B cell (primary cell): ENCODE measurements at regions of chr1 and their contacts with region 1.

Region 1: DNA sequence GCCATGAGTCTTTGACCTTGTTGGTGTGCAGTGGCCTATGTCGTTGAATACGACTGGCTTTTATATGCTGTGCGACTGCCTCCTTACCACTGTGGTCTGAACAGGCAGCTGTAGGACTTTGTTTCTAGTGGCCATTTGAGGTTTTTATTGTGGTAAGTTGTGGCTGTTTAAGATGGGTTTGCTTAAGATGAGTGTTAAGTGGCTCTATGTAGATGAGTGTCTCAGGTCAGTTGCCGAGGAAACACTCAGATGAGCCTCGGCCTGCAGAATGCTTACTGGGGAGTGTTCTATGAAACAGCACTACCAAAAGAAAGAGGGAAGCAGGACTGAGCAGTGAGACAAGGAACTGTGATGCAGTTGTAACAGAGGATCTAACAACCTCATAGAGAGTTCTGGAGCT is 14.9 kb upstream of the CD1C start:
- DNase-seq: peak; percentile 37
- ATAC-seq: peak; percentile 68
- H3K4me3 ChIP-seq: no peak overlapping the region
- H3K4me3 Mint-ChIP-seq: peak overlapping the region; percentile 70
- H3K27ac ChIP-seq: peak overlapping the region in 1 of 2 donors; percentile 47
- H3K27ac Mint-ChIP-seq: peak overlapping the region; percentile 91
- H3K4me1 ChIP-seq: peaks cover 23 to 35% of the 10 kb centered on the region in 2 donors
- H3K4me1 Mint-ChIP-seq: peaks cover 39% of the 10 kb centered on the region
- H3K27me3 ChIP-seq: no peaks in the 10 kb centered on the region
- H3K27me3 Mint-ChIP-seq: no peaks in the 10 kb centered on the region
- CTCF ChIP-seq: no peak

Region 2: GRCh38 chr1:157963713-157964112 is 311.1 kb before region 1 on chr1:
- CTCF ChIA-PET with region 1: no interaction called
- POLR2A ChIA-PET with region 1: no interaction called
- intact Hi-C with region 1: no loop called
- DNase-seq: peak; percentile 74
- ATAC-seq: peak; percentile 57
- H3K4me3 ChIP-seq: no peak overlapping the region
- H3K4me3 Mint-ChIP-seq: no peak overlapping the region
- H3K27ac ChIP-seq: no peak overlapping the region
- H3K27ac Mint-ChIP-seq: no peak overlapping the region
- H3K4me1 ChIP-seq: no peaks in the 10 kb centered on the region
- H3K4me1 Mint-ChIP-seq: no peaks in the 10 kb centered on the region
- H3K27me3 ChIP-seq: peaks cover 0 to 16% (median 8%) of the 10 kb centered on the region in 4 experiments
- H3K27me3 Mint-ChIP-seq: peaks cover 25% of the 10 kb centered on the region
- CTCF ChIP-seq: peak; percentile 98

Region 3: DNA sequence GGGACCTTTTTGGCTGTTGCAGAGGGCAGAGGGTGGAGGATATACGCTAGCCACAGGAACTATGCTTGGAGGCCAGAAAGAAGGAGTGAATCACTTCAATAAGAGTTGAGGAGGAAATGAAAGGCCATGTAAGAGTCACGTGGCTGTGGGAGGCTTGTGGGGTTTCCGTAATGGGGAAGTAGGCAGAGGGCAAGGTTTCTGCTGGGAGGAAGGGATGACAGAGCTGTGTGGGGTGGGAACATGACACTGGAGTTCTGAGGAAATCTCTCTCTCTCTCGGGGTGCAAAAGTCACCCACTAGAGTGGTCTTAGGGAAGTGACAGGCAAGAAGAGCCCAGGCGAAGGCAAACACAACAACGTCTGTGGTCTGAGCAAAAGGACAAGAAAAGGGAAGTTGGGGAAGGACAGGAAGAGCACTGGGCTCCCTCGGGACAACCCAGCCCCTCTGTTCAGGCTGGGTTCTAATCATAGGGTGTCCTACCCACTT is 11.0 kb after region 1 on chr1:
- CTCF ChIA-PET with region 1: interaction called, 3 read pairs
- POLR2A ChIA-PET with region 1: no interaction called
- intact Hi-C with region 1: loop called (anchors 2 kb)
- DNase-seq: peak; percentile 91
- ATAC-seq: peak; percentile 77
- H3K4me3 ChIP-seq: peak overlapping the region; percentile 3 to 59 (median 30)
- H3K4me3 Mint-ChIP-seq: peak overlapping the region; percentile 86
- H3K27ac ChIP-seq: peak overlapping the region; percentile 75 to 79
- H3K27ac Mint-ChIP-seq: peak overlapping the region; percentile 94
- H3K4me1 ChIP-seq: peaks cover 80 to 93% of the 10 kb centered on the region in 2 donors
- H3K4me1 Mint-ChIP-seq: peaks cover 72% of the 10 kb centered on the region
- H3K27me3 ChIP-seq: no peaks in the 10 kb centered on the region
- H3K27me3 Mint-ChIP-seq: no peaks in the 10 kb centered on the region
- CTCF ChIP-seq: no peak